ENCODE measurements at regions of chr14 and their contacts with region 1.

Region 1: DNA sequence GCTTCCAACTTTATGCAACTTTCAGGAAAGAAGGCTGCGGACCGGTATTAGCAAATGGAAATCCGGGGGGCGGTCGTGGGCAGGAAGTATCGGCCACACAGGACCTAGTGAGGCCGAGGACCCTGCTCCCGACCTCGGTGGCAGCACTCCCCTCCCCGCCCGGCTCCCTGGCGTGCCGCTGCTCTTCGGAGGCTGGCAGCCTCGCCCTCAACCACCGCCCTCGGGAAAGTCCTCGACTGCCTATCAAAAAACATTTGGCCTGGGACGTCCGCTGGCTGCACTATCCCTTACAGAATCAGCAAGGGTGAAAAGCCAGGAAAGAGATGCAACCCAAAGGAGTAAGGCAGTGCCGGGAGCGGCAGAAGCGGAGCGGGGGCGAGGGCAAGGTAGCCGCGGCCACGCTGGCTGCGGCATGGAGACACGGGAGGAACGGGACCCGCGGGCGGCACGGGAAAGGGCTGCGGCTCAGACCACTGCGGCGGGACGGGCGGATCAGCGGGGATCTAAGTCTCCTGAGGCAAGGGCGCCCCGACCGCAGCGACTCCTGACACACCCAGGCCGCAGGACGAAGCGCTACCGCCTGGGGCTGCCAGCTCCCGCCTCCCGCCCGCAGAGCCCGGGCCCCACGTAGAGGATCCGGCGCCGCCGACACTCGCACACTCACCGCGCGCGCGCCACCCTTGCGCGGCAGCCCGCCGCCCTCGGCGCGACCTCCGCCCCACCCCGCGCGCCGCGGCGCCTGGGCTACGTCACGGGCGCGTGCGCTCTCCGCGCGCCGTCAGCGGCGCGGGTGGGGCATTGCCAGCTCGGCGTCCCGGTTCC is at the starts of genes BBOF1 and ENTPD5:
- DNase-seq: peak; percentile 87
- H3K4me3 Mint-ChIP-seq: peak within 1 kb of the TSS; percentile 95
- H3K27ac Mint-ChIP-seq: peak within 1 kb of the TSS; percentile 89
- H3K4me1 Mint-ChIP-seq: peaks cover 5% of the 10 kb centered on the region
- H3K27me3 Mint-ChIP-seq: no peaks in the 10 kb centered on the region
- total RNA-seq, gene BBOF1: 1.0 to 1.3 TPM
- total RNA-seq, gene ENTPD5: 10.2 to 11.2 TPM

Region 2: GRCh38 chr14:73886449-73887317 is 132.1 kb before region 1 on chr14 and contains the start of gene ZNF410:
- CTCF ChIA-PET with region 1: no interaction called
- POLR2A ChIA-PET with region 1: interaction called, 10 read pairs
- intact Hi-C with region 1: loop called (anchors 1 kb)
- DNase-seq: peak; percentile 97
- H3K4me3 Mint-ChIP-seq: peak within 1 kb of the TSS; percentile 93
- H3K27ac Mint-ChIP-seq: peak within 1 kb of the TSS; percentile 95
- H3K4me1 Mint-ChIP-seq: peaks cover 47% of the 10 kb centered on the region
- H3K27me3 Mint-ChIP-seq: no peaks in the 10 kb centered on the region
- total RNA-seq, gene ZNF410: 65.2 to 68.7 TPM

Region 3: GRCh38 chr14:74249433-74250375 is 230.9 kb after region 1 on chr14:
- CTCF ChIA-PET with region 1: interaction called, 4 read pairs
- POLR2A ChIA-PET with region 1: no interaction called
- intact Hi-C with region 1: loop called (anchors 5 kb)
- DNase-seq: no peak
- H3K4me3 Mint-ChIP-seq: no peak overlapping the region
- H3K27ac Mint-ChIP-seq: no peak overlapping the region
- H3K4me1 Mint-ChIP-seq: peaks cover 6% of the 10 kb centered on the region
- H3K27me3 Mint-ChIP-seq: peaks cover 30% of the 10 kb centered on the region

Measured in activated CD4-positive, alpha-beta memory T cell treated with anti-CD3 and anti-CD28 coated beads for 36 hours (primary cell).